PC-3 (cell line): ENCODE measurements at regions of chr6 and their contacts with region 1.

Region 1: DNA sequence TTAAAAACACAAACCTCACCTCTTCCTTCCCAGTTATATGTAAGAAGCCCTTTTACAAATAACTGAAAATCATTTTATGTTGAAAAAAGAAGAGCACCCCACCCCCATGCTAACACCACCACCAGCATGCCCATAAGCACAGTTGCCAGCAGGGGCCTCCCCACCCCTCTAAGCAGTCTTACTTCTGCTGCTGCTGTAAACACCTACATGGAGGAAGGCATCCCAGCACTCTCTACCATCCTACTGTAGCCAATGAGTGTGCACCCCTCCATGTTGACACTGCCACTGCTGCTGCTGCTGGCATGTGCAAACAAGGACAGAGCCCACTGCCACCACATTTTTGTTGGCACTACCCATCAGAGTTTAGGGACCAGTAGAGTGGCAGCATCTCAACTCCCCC is 49.6 kb upstream of the PHIP start:
- DNase-seq: no peak
- ATAC-seq: no peak
- H3K4me3 ChIP-seq: no peak overlapping the region
- H3K27ac ChIP-seq: no peak overlapping the region
- H3K4me1 ChIP-seq: no peaks in the 10 kb centered on the region
- H3K27me3 ChIP-seq: no peaks in the 10 kb centered on the region
- CTCF ChIP-seq: no peak

Region 2: DNA sequence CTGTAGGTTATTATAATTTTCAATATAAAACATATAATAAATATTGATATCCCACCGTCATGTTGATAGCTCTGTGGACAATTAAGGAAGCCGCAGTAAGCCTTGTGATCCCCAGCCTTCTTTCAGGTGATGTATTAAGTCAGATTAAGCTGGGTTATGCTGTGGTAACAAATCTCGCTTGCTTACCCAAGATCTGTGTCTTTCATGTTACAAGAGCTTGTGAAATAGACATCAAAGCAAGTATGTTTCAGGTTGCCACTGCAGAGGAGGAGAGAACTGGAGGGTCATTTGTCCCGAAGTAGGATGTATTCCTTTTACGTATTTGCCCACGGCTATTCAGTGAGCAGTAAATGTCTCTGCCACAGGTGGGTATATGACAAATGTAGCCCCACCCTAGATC is 961.0 kb after region 1 on chr6:
- CTCF ChIA-PET with region 1: interaction called, 12 read pairs
- POLR2A ChIA-PET with region 1: no interaction called
- intact Hi-C with region 1: no loop called
- DNase-seq: no peak
- ATAC-seq: no peak
- H3K4me3 ChIP-seq: no peak overlapping the region
- H3K27ac ChIP-seq: no peak overlapping the region
- H3K4me1 ChIP-seq: no peaks in the 10 kb centered on the region
- H3K27me3 ChIP-seq: no peaks in the 10 kb centered on the region
- CTCF ChIP-seq: no peak